ENCODE measurements at regions of chr3 and their contacts with region 1.

Region 1: GRCh38 chr3:50674349-50675178 is at the start of gene DOCK3:
- DNase-seq: peak; percentile 57
- H3K4me3 Mint-ChIP-seq: peak within 1 kb of the TSS; percentile 51
- H3K27ac Mint-ChIP-seq: no peak within 1 kb of the TSS
- H3K4me1 Mint-ChIP-seq: peaks cover 7% of the 10 kb centered on the region
- H3K27me3 Mint-ChIP-seq: peaks cover 78% of the 10 kb centered on the region
- CTCF ChIP-seq: no peak
- total RNA-seq, gene DOCK3: 0.19 and 0.34 TPM in 2 replicates

Region 2: GRCh38 chr3:50885070-50885850 is 210.7 kb after region 1 on chr3:
- CTCF ChIA-PET with region 1: no interaction called
- intact Hi-C with region 1: loop called (anchors 10 kb)
- DNase-seq: peak; percentile 2
- H3K4me3 Mint-ChIP-seq: no peak overlapping the region
- H3K27ac Mint-ChIP-seq: no peak overlapping the region
- H3K4me1 Mint-ChIP-seq: no peaks in the 10 kb centered on the region
- H3K27me3 Mint-ChIP-seq: peaks cover 29% of the 10 kb centered on the region
- CTCF ChIP-seq: no peak

Region 3: DNA sequence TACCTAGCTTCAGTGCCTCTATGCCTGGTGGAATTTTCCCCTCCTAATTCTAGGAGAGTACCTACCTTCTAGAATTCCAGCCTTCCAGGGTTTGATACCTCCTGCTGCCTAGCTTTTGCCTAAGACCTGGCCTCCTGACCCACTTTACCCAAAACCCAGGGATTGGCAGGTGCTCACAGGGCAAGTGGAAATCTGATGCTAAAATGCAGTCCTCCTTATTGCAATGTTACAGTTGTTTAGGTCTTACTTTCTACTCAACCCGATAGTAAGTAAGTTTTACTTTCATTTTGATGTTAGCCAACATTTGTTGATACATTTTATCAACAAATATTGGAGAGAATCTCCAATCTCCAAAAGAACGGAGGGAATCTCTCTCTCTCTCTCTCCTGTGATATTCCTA is 276.0 kb after region 1 on chr3:
- CTCF ChIA-PET with region 1: no interaction called
- intact Hi-C with region 1: no loop called
- DNase-seq: no peak
- H3K4me3 Mint-ChIP-seq: peak overlapping the region; percentile 7
- H3K27ac Mint-ChIP-seq: no peak overlapping the region
- H3K4me1 Mint-ChIP-seq: no peaks in the 10 kb centered on the region
- H3K27me3 Mint-ChIP-seq: no peaks in the 10 kb centered on the region
- CTCF ChIP-seq: no peak

Measured in Calu3 (cell line).